OCI-LY7 (cell line): ENCODE measurements at regions of chr17 and their contacts with region 1.

Region 1: DNA sequence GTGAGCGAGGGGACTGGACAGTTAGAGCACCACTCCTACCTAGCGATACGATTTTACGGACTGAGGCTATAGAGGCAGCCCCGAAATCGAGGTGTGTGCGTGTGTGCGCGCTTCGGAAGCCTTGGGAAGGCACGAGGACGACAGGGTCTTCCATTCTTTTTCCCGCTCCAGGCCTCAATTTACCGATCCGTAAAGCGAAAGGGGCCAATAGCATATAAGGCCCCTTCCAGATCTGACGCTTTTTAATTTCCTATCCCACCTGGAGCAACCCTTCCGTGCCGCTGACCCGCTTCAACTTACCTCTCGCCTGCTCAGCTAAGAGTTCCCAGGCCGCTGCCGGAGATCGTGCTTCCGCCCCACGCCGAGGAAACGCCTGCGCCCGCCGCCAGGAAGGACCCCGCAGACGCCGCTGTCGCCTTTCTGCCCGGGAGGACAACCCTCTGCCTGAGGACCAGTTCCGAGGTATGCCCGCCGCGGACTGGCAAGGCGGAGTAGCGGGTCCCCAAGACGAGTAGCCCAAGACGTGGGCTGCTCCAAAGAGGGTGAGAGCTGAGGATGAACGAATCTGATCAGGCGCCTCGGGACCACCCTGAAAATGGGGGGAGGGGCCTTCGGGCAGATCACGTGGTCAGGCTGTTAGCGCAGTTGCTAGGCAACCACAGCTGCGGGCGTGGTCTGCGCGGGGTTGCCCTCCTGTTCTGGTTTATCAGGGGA is at the start of gene EFTUD2:
- DNase-seq: peak; percentile 93
- H3K4me3 ChIP-seq: peak within 1 kb of the TSS; percentile 95
- H3K27ac ChIP-seq: peak within 1 kb of the TSS; percentile 52
- H3K4me1 ChIP-seq: peaks cover 18% of the 10 kb centered on the region
- CTCF ChIP-seq: no peak
- total RNA-seq, gene EFTUD2: 73.5 and 91.4 TPM in 2 replicates

Region 2: GRCh38 chr17:44689477-44690217 is 209.6 kb before region 1 on chr17 and contains the start of gene CCDC43:
- CTCF ChIA-PET with region 1: no interaction called
- POLR2A ChIA-PET with region 1: no interaction called
- intact Hi-C with region 1: no loop called
- DNase-seq: peak; percentile 92
- H3K4me3 ChIP-seq: peak within 1 kb of the TSS; percentile 91
- H3K27ac ChIP-seq: peak within 1 kb of the TSS; percentile 61
- H3K4me1 ChIP-seq: peaks cover 21% of the 10 kb centered on the region
- CTCF ChIP-seq: no peak
- total RNA-seq, gene CCDC43: 33.2 and 42.4 TPM in 2 replicates

Region 3: GRCh38 chr17:44947461-44948314 is 48.5 kb after region 1 on chr17 and contains the start of gene KIF18B:
- CTCF ChIA-PET with region 1: no interaction called
- POLR2A ChIA-PET with region 1: no interaction called
- intact Hi-C with region 1: loop called (anchors 2 kb)
- DNase-seq: peak; percentile 98
- H3K4me3 ChIP-seq: peak within 1 kb of the TSS; percentile 82
- H3K27ac ChIP-seq: peak within 1 kb of the TSS; percentile 77
- H3K4me1 ChIP-seq: peaks cover 27% of the 10 kb centered on the region
- CTCF ChIP-seq: peak; percentile 56
- total RNA-seq, gene KIF18B: 33.4 and 42.2 TPM in 2 replicates